ENCODE measurements at regions of chr16 and their contacts with region 1.

Region 1: DNA sequence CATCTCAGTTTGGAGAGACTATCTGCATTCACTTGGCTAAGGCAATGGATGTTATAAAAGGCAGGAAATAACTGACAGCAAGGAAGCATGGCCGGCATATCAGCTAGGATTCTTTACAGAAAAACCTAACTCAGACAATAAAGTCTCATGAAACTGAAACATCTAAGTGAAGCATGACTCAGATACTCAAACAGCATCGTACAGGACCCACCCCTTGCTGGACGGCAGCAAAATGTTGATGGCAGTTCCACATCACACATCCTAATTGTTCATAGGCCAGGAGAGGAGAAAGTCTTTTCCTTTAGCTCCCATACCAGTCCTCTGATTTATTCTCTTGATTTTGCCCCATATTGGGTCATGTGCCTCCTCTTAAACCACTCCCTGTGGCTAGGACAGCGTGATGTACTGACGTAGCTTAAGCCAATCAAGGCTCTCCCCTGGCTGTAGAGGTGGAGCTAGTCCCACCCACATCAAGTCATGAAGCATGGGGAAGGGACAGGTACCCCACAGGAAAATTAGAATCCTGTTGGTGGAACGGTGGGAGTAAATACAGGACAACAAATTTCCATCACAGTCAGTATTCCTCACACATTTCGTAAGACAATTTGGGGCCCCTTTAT is 178.9 kb downstream of the IRX3 start:
- DNase-seq: no peak

Region 2: DNA sequence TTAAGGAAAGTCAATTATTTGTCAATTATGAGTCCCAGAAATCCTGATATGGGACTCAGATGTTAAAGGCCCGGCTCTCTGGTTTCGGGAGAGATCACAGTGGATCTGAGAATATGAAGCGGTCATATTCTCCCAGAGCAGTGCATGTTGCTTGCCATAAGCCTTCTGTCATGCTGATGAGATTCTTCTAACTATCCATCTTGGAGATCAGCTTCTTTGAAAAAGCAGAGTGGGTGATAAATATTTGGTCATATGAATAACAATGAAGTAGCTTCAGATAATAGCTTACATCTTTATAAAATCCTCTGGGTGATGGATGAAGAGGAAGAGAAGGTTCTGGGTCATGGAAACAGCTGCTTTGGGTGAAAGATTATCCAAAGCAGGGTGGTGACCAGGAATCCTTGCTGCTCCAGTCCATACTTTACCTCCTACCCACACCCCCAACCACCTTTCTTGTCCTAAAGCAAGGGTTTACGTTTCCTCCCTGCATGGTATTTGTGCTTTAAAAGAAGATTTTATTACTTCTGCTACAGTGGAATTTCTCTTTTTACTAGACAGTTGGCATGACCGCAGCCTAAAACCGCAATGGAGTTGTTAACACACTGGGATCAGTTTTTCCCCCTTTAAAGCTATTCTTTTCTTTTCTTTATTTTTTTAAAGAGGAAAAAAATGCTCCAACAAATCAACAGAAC is 57.4 kb before region 1 on chr16:
- intact Hi-C with region 1: no loop called
- DNase-seq: no peak

Region 3: DNA sequence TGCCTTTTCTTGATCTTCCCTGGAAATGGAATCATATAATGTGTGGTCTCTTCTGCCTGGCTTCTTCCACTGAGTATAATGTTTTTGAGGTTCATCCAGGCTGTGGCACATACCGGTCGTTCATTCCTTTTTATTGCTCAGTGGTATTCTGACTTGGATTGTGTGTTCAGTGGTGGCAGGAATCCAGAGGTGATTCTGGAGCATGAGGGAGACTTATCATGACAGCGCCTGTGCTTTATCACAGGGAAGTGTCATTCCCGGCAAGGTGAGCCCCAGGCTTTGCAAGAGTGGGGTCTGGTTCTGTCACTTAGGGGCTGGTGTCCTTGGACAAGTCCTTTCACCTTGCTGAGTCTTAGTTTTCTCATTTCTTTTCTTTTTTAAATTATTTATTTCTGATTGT is 125.9 kb after region 1 on chr16:
- intact Hi-C with region 1: no loop called
- DNase-seq: no peak

Region 4: GRCh38 chr16:55856950-55857349 is 1749.3 kb after region 1 on chr16:
- intact Hi-C with region 1: no loop called
- DNase-seq: no peak

Region 5: GRCh38 chr16:55876854-55877253 is 1769.2 kb after region 1 on chr16:
- intact Hi-C with region 1: loop called in 1 of 2 experiments (anchors 5 kb)
- DNase-seq: no peak